ENCODE measurements at regions of chr9 and their contacts with region 1.

Region 1: GRCh38 chr9:132944302-132945185 is at the start of gene TSC1:
- DNase-seq: peak; percentile 96
- ATAC-seq: peak; percentile 90
- H3K4me3 Mint-ChIP-seq: peak within 1 kb of the TSS; percentile 98
- H3K27ac Mint-ChIP-seq: peak within 1 kb of the TSS; percentile 100
- H3K4me1 Mint-ChIP-seq: peaks cover 29% of the 10 kb centered on the region
- H3K27me3 Mint-ChIP-seq: no peaks in the 10 kb centered on the region
- CTCF ChIP-seq: no peak
- total RNA-seq, gene TSC1: 51.7 and 61.4 TPM in 2 replicates

Region 2: GRCh38 chr9:132973713-132974112 is 29.2 kb after region 1 on chr9:
- CTCF ChIA-PET with region 1: interaction called, 3 read pairs
- POLR2A ChIA-PET with region 1: no interaction called
- intact Hi-C with region 1: loop called (anchors 1 kb)
- DNase-seq: no peak
- ATAC-seq: no peak
- H3K4me3 Mint-ChIP-seq: no peak overlapping the region
- H3K27ac Mint-ChIP-seq: no peak overlapping the region
- H3K4me1 Mint-ChIP-seq: peaks cover 13% of the 10 kb centered on the region
- H3K27me3 Mint-ChIP-seq: peaks cover 18% of the 10 kb centered on the region
- CTCF ChIP-seq: no peak